OCI-LY7 (cell line): ENCODE measurements at regions of chr4 and their contacts with region 1.

Region 1: GRCh38 chr4:89307446-89308160 is at the start of gene GPRIN3:
- DNase-seq: peak; percentile 67
- H3K4me3 ChIP-seq: peak within 1 kb of the TSS; percentile 82
- H3K27ac ChIP-seq: peak within 1 kb of the TSS; percentile 26
- H3K4me1 ChIP-seq: peaks cover 48% of the 10 kb centered on the region
- CTCF ChIP-seq: no peak
- total RNA-seq, gene GPRIN3: 3.6 and 4.6 TPM in 2 replicates

Region 2: GRCh38 chr4:89324671-89325070 is 17.1 kb after region 1 on chr4:
- CTCF ChIA-PET with region 1: no interaction called
- POLR2A ChIA-PET with region 1: interaction called, 10 read pairs
- intact Hi-C with region 1: no loop called
- DNase-seq: peak; percentile 82
- H3K4me3 ChIP-seq: peak overlapping the region; percentile 20
- H3K27ac ChIP-seq: peak overlapping the region; percentile 43
- H3K4me1 ChIP-seq: peaks cover 22% of the 10 kb centered on the region
- CTCF ChIP-seq: no peak

Region 3: GRCh38 chr4:89400287-89401035 is 92.9 kb after region 1 on chr4:
- CTCF ChIA-PET with region 1: no interaction called
- POLR2A ChIA-PET with region 1: no interaction called
- intact Hi-C with region 1: no loop called
- DNase-seq: no peak
- H3K4me3 ChIP-seq: no peak overlapping the region
- H3K27ac ChIP-seq: no peak overlapping the region
- H3K4me1 ChIP-seq: no peaks in the 10 kb centered on the region
- CTCF ChIP-seq: no peak

Region 4: DNA sequence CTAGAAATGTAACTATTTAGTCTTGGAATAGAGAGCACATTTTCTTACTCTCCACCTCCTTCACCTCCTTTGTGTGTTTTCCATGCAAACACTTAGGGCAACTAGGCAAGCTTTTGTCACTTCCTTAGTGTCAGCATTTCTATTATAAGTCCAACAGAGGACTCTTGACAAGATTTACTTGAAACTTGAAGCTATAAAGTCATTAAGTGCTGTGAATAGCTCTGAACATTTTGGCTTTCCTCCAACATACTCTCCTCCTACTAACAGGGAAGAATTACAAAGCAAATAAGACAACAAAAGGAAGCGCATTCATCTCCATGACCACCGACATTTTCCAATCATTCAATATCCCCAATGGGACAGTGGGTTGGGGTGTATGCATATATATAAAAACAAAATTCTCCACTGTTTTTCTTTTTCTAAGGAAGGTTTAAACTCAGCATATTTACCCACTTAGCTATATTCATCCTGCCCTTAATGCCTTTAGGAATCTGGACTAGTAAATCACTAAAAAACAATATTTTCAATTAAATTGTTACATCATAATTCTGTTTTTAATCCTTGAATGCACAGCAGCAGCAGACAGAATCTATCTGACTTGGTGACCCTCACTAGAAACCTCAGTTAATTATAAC is 264.7 kb after region 1 on chr4:
- CTCF ChIA-PET with region 1: no interaction called
- POLR2A ChIA-PET with region 1: no interaction called
- intact Hi-C with region 1: no loop called
- DNase-seq: no peak
- H3K4me3 ChIP-seq: no peak overlapping the region
- H3K27ac ChIP-seq: no peak overlapping the region
- H3K4me1 ChIP-seq: no peaks in the 10 kb centered on the region
- CTCF ChIP-seq: no peak